Naive thymus-derived CD4-positive, alpha-beta T cell (primary cell): ENCODE measurements at regions of chr14 and their contacts with region 1.

Region 1: GRCh38 chr14:75307700-75308379 is 29.2 kb downstream of the FOS start:
- DNase-seq: peak; percentile 36 to 76 (median 59)
- ATAC-seq: peak; percentile 75
- H3K4me3 ChIP-seq: no peak overlapping the region
- H3K4me3 Mint-ChIP-seq: no peak overlapping the region
- H3K27ac ChIP-seq: no peak overlapping the region
- H3K27ac Mint-ChIP-seq: peak overlapping the region in 1 of 9 donors; percentile 20
- H3K4me1 ChIP-seq: peaks cover 0 to 3% of the 10 kb centered on the region in 2 donors
- H3K4me1 Mint-ChIP-seq: peaks cover 4 to 25% (median 11%) of the 10 kb centered on the region in 7 donors
- H3K27me3 ChIP-seq: no peaks in the 10 kb centered on the region
- H3K27me3 Mint-ChIP-seq: peaks cover 0 to 6% (median 0%) of the 10 kb centered on the region in 5 donors

Region 2: GRCh38 chr14:74860906-74861733 is 446.7 kb before region 1 on chr14:
- CTCF ChIA-PET with region 1: no interaction called
- POLR2A ChIA-PET with region 1: no interaction called
- intact Hi-C with region 1: loop called (anchors 5 kb)
- DNase-seq: peak; percentile 76 to 93 (median 86)
- ATAC-seq: peak; percentile 90
- H3K4me3 ChIP-seq: no peak overlapping the region
- H3K4me3 Mint-ChIP-seq: no peak overlapping the region
- H3K27ac ChIP-seq: no peak overlapping the region
- H3K27ac Mint-ChIP-seq: peak overlapping the region in 3 of 9 donors; percentile 41 to 47 (median 45)
- H3K4me1 ChIP-seq: peaks cover 4 to 6% of the 10 kb centered on the region in 2 donors
- H3K4me1 Mint-ChIP-seq: peaks cover 2 to 21% (median 7%) of the 10 kb centered on the region in 7 donors
- H3K27me3 ChIP-seq: no peaks in the 10 kb centered on the region
- H3K27me3 Mint-ChIP-seq: no peaks in the 10 kb centered on the region

Region 3: DNA sequence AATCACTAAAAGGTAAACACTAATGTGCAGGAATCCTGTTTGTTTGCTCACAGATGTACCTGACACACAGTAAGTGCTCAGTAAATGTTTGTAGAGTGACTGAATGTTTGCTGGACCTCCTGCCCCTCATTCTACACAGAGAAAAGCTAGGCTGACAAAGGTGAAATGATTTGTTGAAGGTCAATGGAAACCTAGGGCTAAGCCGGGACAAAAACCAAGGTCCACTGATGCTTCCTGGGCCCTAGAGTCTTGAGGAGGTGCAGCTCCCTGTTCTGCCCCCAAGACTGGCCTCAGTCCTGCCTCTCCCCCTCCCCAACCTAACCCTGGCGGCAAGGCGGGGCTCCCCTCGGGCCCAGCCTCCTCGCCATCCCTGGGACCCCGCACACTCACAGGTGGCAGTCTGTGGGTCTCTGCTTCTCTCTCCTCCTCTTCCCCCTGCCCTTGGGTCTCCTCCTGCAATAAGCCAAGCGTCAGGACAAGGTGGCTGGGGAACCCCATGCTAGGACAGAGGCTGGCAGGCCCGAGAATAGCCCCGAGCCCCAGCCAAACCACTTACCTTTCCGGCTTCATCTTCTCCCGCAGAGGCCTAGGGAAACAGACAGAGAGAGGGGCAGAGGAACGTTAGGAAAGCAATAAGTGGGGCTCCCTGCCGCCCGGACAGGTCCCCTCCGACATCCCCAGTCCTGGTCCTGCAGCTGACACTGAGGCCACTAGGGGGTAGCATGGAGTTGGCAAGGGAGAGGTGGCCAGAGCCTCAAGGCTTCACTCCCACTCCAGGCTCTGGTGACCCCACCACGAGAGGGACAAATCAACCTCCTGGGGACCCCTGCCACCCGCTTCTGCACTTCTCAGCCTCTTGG is 361.8 kb before region 1 on chr14:
- CTCF ChIA-PET with region 1: no interaction called
- POLR2A ChIA-PET with region 1: no interaction called
- intact Hi-C with region 1: loop called in 1 of 2 experiments (anchors 10 kb)
- DNase-seq: peak; percentile 41 to 79 (median 61)
- ATAC-seq: peak; percentile 78
- H3K4me3 ChIP-seq: no peak overlapping the region
- H3K4me3 Mint-ChIP-seq: peak overlapping the region in 6 of 10 donors; percentile 32 to 67 (median 55)
- H3K27ac ChIP-seq: no peak overlapping the region
- H3K27ac Mint-ChIP-seq: peak overlapping the region in 8 of 9 donors; percentile 17 to 93 (median 52)
- H3K4me1 ChIP-seq: peaks cover 19 to 21% of the 10 kb centered on the region in 2 donors
- H3K4me1 Mint-ChIP-seq: peaks cover 21 to 35% (median 33%) of the 10 kb centered on the region in 7 donors
- H3K27me3 ChIP-seq: no peaks in the 10 kb centered on the region
- H3K27me3 Mint-ChIP-seq: no peaks in the 10 kb centered on the region

Region 4: DNA sequence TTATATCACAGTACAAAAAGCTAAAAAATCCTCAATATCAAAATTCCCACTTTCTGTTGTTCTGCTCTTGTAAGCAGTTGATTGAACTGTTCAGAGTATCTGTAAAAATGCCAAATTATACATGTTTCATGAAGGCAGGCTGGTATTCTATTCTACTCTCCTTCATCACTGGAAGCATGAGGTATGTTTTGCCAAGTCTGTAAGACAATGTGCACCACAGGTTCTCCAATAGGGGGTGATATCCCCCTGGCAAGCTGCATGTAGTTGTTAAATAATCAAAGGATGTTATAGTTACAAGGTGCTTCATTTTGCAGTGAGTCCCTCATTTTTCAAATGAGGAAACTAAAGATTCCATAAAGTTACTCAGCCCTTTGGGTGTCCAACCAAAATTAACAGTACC is 165.9 kb before region 1 on chr14:
- CTCF ChIA-PET with region 1: interaction called, 12 read pairs
- POLR2A ChIA-PET with region 1: no interaction called
- intact Hi-C with region 1: no loop called
- DNase-seq: peak in 7 of 9 donors; percentile 26 to 59 (median 47)
- ATAC-seq: peak; percentile 55
- H3K4me3 ChIP-seq: no peak overlapping the region
- H3K4me3 Mint-ChIP-seq: peak overlapping the region in 1 of 10 donors; percentile 47
- H3K27ac ChIP-seq: no peak overlapping the region
- H3K27ac Mint-ChIP-seq: peak overlapping the region in 8 of 9 donors; percentile 30 to 81 (median 56)
- H3K4me1 ChIP-seq: peaks cover 20 to 50% of the 10 kb centered on the region in 2 donors
- H3K4me1 Mint-ChIP-seq: peaks cover 52 to 86% (median 74%) of the 10 kb centered on the region in 7 donors
- H3K27me3 ChIP-seq: no peaks in the 10 kb centered on the region
- H3K27me3 Mint-ChIP-seq: no peaks in the 10 kb centered on the region

Region 5: GRCh38 chr14:75293920-75294642 is 13.8 kb before region 1 on chr14:
- CTCF ChIA-PET with region 1: interaction called, 10 read pairs
- POLR2A ChIA-PET with region 1: no interaction called
- intact Hi-C with region 1: no loop called
- DNase-seq: peak; percentile 92 to 98 (median 96)
- ATAC-seq: peak; percentile 92
- H3K4me3 ChIP-seq: peak overlapping the region; percentile 61
- H3K4me3 Mint-ChIP-seq: peak overlapping the region; percentile 79 to 93 (median 91)
- H3K27ac ChIP-seq: peak overlapping the region; percentile 96
- H3K27ac Mint-ChIP-seq: peak overlapping the region; percentile 85 to 97 (median 94)
- H3K4me1 ChIP-seq: peaks cover 17 to 25% of the 10 kb centered on the region in 2 donors
- H3K4me1 Mint-ChIP-seq: peaks cover 10 to 26% (median 22%) of the 10 kb centered on the region in 7 donors
- H3K27me3 ChIP-seq: no peaks in the 10 kb centered on the region
- H3K27me3 Mint-ChIP-seq: peaks cover 0 to 24% (median 0%) of the 10 kb centered on the region in 5 donors

Region 6: DNA sequence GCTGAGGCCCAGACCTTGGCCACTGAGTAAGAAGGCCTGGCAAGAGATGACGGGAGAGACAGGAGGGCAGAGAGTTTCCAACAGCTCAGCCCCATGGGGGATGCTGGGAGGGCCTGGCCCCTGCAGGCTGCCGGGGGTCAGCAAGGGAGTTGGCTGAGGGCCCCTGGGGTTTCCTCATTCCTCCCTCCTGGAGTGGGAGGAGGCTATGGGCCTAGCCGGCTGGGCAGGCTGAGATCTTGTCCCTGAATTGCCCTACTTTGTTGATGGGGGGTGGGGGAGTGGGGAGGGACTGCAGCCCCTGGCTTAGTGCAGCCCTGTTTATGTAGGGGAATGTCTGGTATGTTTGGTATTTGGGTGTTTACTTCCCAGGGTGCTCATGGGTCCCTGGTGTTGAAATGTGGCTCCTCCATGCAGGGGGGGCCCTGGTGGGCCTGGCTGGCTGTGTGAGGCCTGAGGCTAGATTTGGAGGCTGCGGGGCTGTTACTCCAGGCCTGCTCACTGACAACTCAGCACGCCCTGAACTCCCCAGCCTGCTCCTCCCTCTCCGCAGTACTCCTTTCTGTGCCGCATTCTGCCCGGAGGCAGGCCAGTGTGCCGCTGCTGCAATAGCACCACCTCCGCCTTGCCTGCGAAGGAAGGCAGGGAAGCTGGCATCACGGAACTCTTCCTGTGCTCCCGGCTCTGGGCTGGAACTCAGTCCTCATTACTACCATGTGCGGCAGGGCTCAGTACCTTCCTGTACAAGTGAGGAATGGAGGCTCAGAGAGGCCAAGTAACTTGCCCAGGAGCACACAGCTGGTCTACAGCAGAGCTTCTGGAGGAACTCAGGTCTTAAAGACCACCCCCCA is 145.3 kb after region 1 on chr14:
- CTCF ChIA-PET with region 1: interaction called, 11 read pairs
- POLR2A ChIA-PET with region 1: no interaction called
- intact Hi-C with region 1: loop called in 1 of 2 experiments (anchors 1 kb)
- DNase-seq: no peak
- ATAC-seq: no peak
- H3K4me3 ChIP-seq: no peak overlapping the region
- H3K4me3 Mint-ChIP-seq: no peak overlapping the region
- H3K27ac ChIP-seq: no peak overlapping the region
- H3K27ac Mint-ChIP-seq: no peak overlapping the region
- H3K4me1 ChIP-seq: no peaks in the 10 kb centered on the region
- H3K4me1 Mint-ChIP-seq: peaks cover 0 to 8% (median 3%) of the 10 kb centered on the region in 7 donors
- H3K27me3 ChIP-seq: no peaks in the 10 kb centered on the region
- H3K27me3 Mint-ChIP-seq: peaks cover 0 to 7% (median 0%) of the 10 kb centered on the region in 5 donors

Region 7: GRCh38 chr14:75560962-75561432 is 253.2 kb after region 1 on chr14:
- CTCF ChIA-PET with region 1: interaction called, 15 read pairs
- POLR2A ChIA-PET with region 1: no interaction called
- intact Hi-C with region 1: loop called (anchors 1 to 5 kb)
- DNase-seq: peak in 4 of 9 donors; percentile 19 to 54 (median 28)
- ATAC-seq: peak; percentile 82
- H3K4me3 ChIP-seq: no peak overlapping the region
- H3K4me3 Mint-ChIP-seq: peak overlapping the region in 7 of 10 donors; percentile 18 to 77 (median 40)
- H3K27ac ChIP-seq: no peak overlapping the region
- H3K27ac Mint-ChIP-seq: peak overlapping the region in 6 of 9 donors; percentile 12 to 68 (median 48)
- H3K4me1 ChIP-seq: peaks cover 4 to 8% of the 10 kb centered on the region in 2 donors
- H3K4me1 Mint-ChIP-seq: peaks cover 17 to 62% (median 39%) of the 10 kb centered on the region in 7 donors
- H3K27me3 ChIP-seq: no peaks in the 10 kb centered on the region
- H3K27me3 Mint-ChIP-seq: no peaks in the 10 kb centered on the region